Calu3 (cell line): ENCODE measurements at regions of chr12 and their contacts with region 1.

Region 1: GRCh38 chr12:42332301-42333285 is 6.6 kb downstream of the PPHLN1 start:
- DNase-seq: peak; percentile 17
- H3K4me3 Mint-ChIP-seq: no peak overlapping the region
- H3K27ac Mint-ChIP-seq: no peak overlapping the region
- H3K4me1 Mint-ChIP-seq: peaks cover 30% of the 10 kb centered on the region
- H3K27me3 Mint-ChIP-seq: no peaks in the 10 kb centered on the region
- CTCF ChIP-seq: no peak

Region 2: DNA sequence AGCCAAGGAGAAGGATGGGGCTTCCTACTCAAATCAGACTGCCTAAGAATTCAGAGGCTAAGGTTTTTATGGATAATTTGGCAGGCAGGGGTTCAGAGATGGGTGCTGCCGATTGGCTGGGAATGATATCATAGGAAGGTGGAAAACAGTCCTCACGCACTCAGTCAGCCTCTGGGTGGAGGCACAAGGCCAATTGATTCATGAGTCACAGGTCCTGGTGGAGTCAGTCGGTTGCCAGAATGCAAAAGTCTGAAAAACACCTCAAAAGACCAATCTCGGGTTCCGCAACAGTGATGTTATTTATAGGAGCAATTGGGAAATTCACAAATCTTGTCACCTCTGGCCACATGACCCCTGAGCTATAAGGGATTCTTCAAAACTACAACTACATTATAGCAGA is 293.4 kb before region 1 on chr12:
- CTCF ChIA-PET with region 1: no interaction called
- intact Hi-C with region 1: loop called (anchors 2 kb)
- DNase-seq: peak; percentile 33
- H3K4me3 Mint-ChIP-seq: no peak overlapping the region
- H3K27ac Mint-ChIP-seq: no peak overlapping the region
- H3K4me1 Mint-ChIP-seq: no peaks in the 10 kb centered on the region
- H3K27me3 Mint-ChIP-seq: no peaks in the 10 kb centered on the region
- CTCF ChIP-seq: no peak

Region 3: DNA sequence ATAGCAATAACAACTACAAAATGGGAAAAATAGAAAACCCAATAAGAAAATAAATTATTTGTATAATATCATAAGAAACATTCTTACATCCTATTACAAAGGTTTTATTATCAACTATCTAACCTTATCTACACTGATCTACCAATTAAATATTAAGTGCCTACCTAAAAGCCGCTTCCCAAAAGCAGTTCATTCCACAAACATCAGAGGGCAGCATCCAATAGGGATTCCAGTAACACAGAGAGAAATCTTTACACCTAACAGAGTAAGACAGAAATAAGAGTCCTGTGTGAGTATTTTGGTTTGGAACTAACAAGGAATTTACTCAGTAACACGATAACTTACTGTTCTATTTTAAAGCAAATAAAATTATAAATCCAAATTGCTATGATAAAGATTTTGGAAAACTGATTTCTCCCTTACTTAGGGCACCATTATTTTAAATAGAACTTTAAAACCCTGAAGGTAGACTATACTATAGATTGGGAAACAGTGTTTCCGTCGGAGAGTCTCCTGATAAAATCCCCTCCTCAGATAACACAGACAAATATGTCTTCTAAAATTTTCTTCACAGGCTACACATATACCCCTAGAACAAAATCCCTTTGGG is 202.9 kb before region 1 on chr12:
- CTCF ChIA-PET with region 1: interaction called, 3 read pairs
- intact Hi-C with region 1: loop called (anchors 1 kb)
- DNase-seq: peak; percentile 41
- H3K4me3 Mint-ChIP-seq: no peak overlapping the region
- H3K27ac Mint-ChIP-seq: no peak overlapping the region
- H3K4me1 Mint-ChIP-seq: peaks cover 13% of the 10 kb centered on the region
- H3K27me3 Mint-ChIP-seq: no peaks in the 10 kb centered on the region
- CTCF ChIP-seq: peak; percentile 21

Region 4: GRCh38 chr12:42237052-42237852 is 95.3 kb before region 1 on chr12:
- CTCF ChIA-PET with region 1: no interaction called
- intact Hi-C with region 1: loop called (anchors 5 kb)
- DNase-seq: peak; percentile 66
- H3K4me3 Mint-ChIP-seq: peak overlapping the region; percentile 92
- H3K27ac Mint-ChIP-seq: no peak overlapping the region
- H3K4me1 Mint-ChIP-seq: peaks cover 9% of the 10 kb centered on the region
- H3K27me3 Mint-ChIP-seq: no peaks in the 10 kb centered on the region
- CTCF ChIP-seq: no peak

Region 5: GRCh38 chr12:42862055-42862454 is 529.5 kb after region 1 on chr12:
- CTCF ChIA-PET with region 1: no interaction called
- intact Hi-C with region 1: no loop called
- DNase-seq: no peak
- H3K4me3 Mint-ChIP-seq: no peak overlapping the region
- H3K27ac Mint-ChIP-seq: no peak overlapping the region
- H3K4me1 Mint-ChIP-seq: peaks cover 6% of the 10 kb centered on the region
- H3K27me3 Mint-ChIP-seq: no peaks in the 10 kb centered on the region
- CTCF ChIP-seq: no peak